GM12878 (cell line): ENCODE measurements at regions of chr14 and their contacts with region 1.

Region 1: GRCh38 chr14:59189786-59190771 is 1.6 kb downstream of the DAAM1 start:
- DNase-seq: peak; percentile 69
- ATAC-seq: peak; percentile 74
- H3K4me3 ChIP-seq: peak overlapping the region; percentile 91
- H3K27ac ChIP-seq: peak overlapping the region; percentile 49
- H3K4me1 ChIP-seq: peaks cover 7% of the 10 kb centered on the region
- H3K27me3 ChIP-seq: no peaks in the 10 kb centered on the region
- CTCF ChIP-seq: peak; percentile 15 to 46 (median 34); a peak in 4 of 6 replicates
- EP300 ChIP-seq: peak in 1 of 2 experiments; percentile 50; a peak in 2 of 4 replicates
- POLR2A ChIP-seq: no peak; the same call in 1 of the 2 replicates
- RAD21 ChIP-seq: no peak

Region 2: GRCh38 chr14:59132796-59133494 is 57.1 kb before region 1 on chr14:
- CTCF ChIA-PET with region 1: interaction called, 13 read pairs
- POLR2A ChIA-PET with region 1: interaction called, 4 read pairs
- RAD21 ChIA-PET with region 1: interaction called, 8 read pairs
- SMC1A ChIA-PET with region 1: interaction called, 35 read pairs
- in situ Hi-C with region 1: no loop called
- intact Hi-C with region 1: loop called (anchors 1 kb)
- DNase-seq: no peak
- ATAC-seq: no peak
- H3K4me3 ChIP-seq: no peak overlapping the region
- H3K27ac ChIP-seq: no peak overlapping the region
- H3K4me1 ChIP-seq: no peaks in the 10 kb centered on the region
- H3K27me3 ChIP-seq: no peaks in the 10 kb centered on the region
- CTCF ChIP-seq: peak in 1 of 3 experiments; percentile 14; a peak in 1 of 6 replicates
- EP300 ChIP-seq: no peak
- POLR2A ChIP-seq: no peak
- RAD21 ChIP-seq: no peak

Region 3: GRCh38 chr14:59208224-59208814 is 18.2 kb after region 1 on chr14:
- CTCF ChIA-PET with region 1: interaction called, 12 read pairs
- POLR2A ChIA-PET with region 1: interaction called, 16 read pairs
- RAD21 ChIA-PET with region 1: interaction called, 15 read pairs
- SMC1A ChIA-PET with region 1: interaction called, 78 read pairs
- in situ Hi-C with region 1: no loop called
- intact Hi-C with region 1: no loop called
- DNase-seq: peak; percentile 65
- ATAC-seq: peak; percentile 84
- H3K4me3 ChIP-seq: no peak overlapping the region
- H3K27ac ChIP-seq: peak overlapping the region; percentile 62; the same call in 1 of the 2 replicates
- H3K4me1 ChIP-seq: peaks cover 8% of the 10 kb centered on the region; the same call in 1 of the 2 replicates
- H3K27me3 ChIP-seq: no peaks in the 10 kb centered on the region
- CTCF ChIP-seq: no peak
- EP300 ChIP-seq: no peak
- POLR2A ChIP-seq: no peak
- RAD21 ChIP-seq: no peak

Region 4: GRCh38 chr14:59245809-59246295 is 55.8 kb after region 1 on chr14:
- CTCF ChIA-PET with region 1: interaction called, 25 read pairs
- POLR2A ChIA-PET with region 1: interaction called, 31 read pairs
- RAD21 ChIA-PET with region 1: interaction called, 22 read pairs
- SMC1A ChIA-PET with region 1: interaction called, 27 read pairs
- in situ Hi-C with region 1: no loop called
- intact Hi-C with region 1: loop called (anchors 2 kb)
- DNase-seq: peak; percentile 69
- ATAC-seq: peak; percentile 87
- H3K4me3 ChIP-seq: no peak overlapping the region
- H3K27ac ChIP-seq: peak overlapping the region; percentile 65
- H3K4me1 ChIP-seq: peaks cover 17% of the 10 kb centered on the region
- H3K27me3 ChIP-seq: no peaks in the 10 kb centered on the region
- CTCF ChIP-seq: no peak
- EP300 ChIP-seq: peak; percentile 58 to 64
- POLR2A ChIP-seq: no peak
- RAD21 ChIP-seq: no peak

Region 5: GRCh38 chr14:59438195-59438647 is 248.1 kb after region 1 on chr14:
- CTCF ChIA-PET with region 1: interaction called, 6 read pairs
- POLR2A ChIA-PET with region 1: no interaction called
- RAD21 ChIA-PET with region 1: interaction called, 3 read pairs
- SMC1A ChIA-PET with region 1: interaction called, 17 read pairs
- in situ Hi-C with region 1: no loop called
- intact Hi-C with region 1: no loop called
- DNase-seq: no peak
- ATAC-seq: peak; percentile 50
- H3K4me3 ChIP-seq: no peak overlapping the region
- H3K27ac ChIP-seq: no peak overlapping the region
- H3K4me1 ChIP-seq: no peaks in the 10 kb centered on the region
- H3K27me3 ChIP-seq: no peaks in the 10 kb centered on the region
- CTCF ChIP-seq: no peak
- EP300 ChIP-seq: no peak
- POLR2A ChIP-seq: no peak
- RAD21 ChIP-seq: no peak